Posterior vena cava (tissue), 2 donors: ENCODE measurements at regions of chr9 and their contacts with region 1.

Region 1: DNA sequence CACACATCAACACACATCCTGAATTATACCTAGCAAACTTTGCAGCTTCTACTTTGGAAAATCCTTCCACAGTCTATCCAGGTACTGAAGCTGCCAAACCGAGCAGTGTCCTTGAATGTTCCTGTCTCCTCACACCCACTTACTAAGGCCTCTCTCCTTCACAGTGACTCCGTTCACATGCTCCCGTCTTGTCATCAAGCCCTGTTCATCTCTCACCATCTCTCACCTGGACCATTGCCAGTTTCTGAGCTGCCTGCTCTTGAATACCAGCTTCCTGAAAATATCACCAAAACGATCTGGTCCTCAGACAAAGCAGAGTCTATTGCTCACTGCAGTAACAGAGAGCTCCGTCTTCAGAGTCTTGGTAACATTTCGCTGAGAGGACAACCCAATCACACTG is 57.4 kb downstream of the GCNT1 start:
- DNase-seq: no peak

Region 2: DNA sequence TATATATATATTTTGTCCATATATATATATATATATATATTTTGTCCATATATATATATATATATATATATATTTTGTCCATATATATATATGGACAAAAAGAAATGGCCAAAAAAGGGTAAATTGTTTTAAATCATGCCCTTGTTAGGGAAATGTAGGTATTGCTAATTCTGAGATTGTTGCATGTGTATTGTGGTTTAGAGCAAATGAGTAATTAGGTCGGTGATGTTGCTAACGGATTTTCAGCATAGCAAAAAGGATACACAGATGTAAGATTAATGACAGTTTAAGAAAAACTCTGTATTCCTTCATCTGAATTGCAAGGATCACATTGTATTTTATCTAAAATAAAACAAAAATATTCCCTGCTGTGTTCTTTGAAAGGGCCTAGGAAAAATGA is 1387.8 kb before region 1 on chr9:
- intact Hi-C with region 1: loop called in 1 of 2 experiments (anchors 5 kb)
- DNase-seq: no peak

Region 3: DNA sequence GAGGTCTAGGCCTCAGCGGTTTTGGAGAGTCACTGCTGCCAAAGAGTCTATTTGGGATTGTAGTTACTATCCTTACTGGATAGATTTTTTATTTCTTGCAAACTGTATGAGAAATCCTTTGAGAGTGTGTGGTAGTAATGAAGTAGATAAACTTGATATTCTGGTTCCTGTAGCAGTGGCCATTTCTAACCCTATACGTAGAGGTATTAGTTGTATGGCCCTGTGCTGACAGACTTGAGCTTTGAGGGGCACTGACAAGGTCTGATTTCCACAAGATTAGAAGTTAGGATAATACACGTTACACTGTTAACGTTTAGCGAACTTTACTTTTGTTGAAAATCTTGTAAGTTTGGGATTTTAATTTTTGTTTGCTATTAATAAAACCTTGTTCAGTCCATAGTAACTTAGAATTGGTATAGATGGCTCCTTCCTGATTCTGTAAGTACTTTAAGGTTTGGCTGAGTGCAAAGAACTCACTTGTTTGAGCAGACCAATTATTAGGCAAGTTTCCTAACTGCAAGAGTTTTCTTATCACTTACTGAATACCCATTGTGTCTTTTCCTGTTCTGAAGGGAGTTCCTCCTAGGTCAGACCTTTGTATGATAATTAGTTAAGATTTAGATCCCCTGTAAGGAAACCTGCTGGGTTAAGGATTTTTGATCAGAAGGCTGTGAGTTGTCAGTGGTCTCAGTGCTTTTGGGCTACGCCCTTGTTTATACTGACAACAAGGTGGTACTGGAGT is 25.9 kb before region 1 on chr9:
- intact Hi-C with region 1: loop called in 1 of 2 experiments (anchors 1 kb)
- DNase-seq: no peak